GM12878 (cell line): ENCODE measurements at regions of chr10 and their contacts with region 1.

Region 1: DNA sequence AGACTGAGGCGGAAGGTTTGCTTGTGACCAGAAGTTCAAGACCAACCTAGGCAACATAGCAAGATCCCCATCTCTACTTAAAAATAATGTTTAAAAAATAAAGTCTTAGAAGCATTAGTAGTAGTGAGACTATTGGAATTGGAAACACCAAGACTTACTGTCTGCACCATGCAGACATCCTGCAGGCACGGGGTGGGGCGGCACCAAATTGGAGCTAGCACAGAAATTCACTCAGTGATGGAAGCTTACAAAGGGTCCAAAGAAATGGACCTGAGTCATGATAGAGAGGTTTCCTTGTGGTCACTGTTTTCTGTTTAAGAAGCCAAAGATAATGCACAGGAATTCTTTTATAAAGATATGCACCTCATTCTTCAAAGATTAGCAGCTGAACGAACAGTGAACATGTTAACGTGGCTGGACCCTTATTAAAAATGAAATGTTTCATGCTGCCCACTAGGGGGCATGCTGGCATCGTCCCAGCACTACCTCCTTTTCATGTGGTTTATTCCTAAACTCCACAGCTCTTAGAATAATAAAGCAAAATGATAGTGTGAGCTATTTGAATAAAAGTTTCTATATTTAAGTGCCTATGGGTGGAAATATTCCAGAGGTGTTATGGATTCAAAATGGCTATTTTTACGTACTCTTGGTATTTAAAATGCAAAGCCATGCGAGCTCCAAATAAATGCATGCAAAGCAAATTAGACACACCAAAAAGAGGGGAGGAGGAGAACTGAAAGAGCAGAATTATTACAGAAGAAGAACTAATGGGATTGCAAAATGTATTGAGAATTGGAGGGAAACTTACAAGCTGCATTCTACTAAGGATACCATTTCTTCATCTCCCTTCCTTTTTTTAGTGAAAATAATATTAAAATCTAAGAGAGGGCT is 28.6 kb downstream of the PDSS1 start:
- DNase-seq: no peak
- ATAC-seq: peak; percentile 81
- H3K4me3 ChIP-seq: no peak overlapping the region
- H3K27ac ChIP-seq: no peak overlapping the region
- H3K4me1 ChIP-seq: no peaks in the 10 kb centered on the region
- H3K27me3 ChIP-seq: no peaks in the 10 kb centered on the region
- CTCF ChIP-seq: peak; percentile 70 to 89 (median 76); a peak in 5 of 6 replicates
- EP300 ChIP-seq: no peak
- POLR2A ChIP-seq: no peak
- RAD21 ChIP-seq: peak; percentile 97

Region 2: DNA sequence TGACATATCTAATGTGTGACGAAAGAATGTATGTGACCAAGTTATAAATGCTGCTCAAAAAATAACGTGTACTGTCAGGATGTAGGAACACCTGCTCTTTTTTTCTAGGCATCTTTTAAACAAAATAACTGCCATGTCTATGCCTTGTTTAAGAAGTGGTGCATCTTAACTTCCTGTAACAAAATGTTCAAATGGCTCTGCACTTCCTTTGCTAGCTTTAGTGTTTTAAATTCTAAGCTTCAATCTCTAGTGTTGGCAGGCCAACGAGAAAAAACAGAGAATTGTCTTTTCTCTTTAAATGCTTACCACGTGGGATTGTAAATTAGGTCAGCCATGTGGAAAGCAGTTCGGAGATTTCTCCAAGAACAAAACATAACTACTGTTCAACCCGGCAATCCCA is 43.2 kb before region 1 on chr10:
- CTCF ChIA-PET with region 1: interaction called, 19 read pairs
- POLR2A ChIA-PET with region 1: no interaction called
- RAD21 ChIA-PET with region 1: interaction called, 4 read pairs
- SMC1A ChIA-PET with region 1: interaction called, 4 read pairs
- in situ Hi-C with region 1: no loop called
- intact Hi-C with region 1: no loop called
- DNase-seq: no peak
- ATAC-seq: no peak
- H3K4me3 ChIP-seq: no peak overlapping the region
- H3K27ac ChIP-seq: no peak overlapping the region
- H3K4me1 ChIP-seq: no peaks in the 10 kb centered on the region
- H3K27me3 ChIP-seq: no peaks in the 10 kb centered on the region
- CTCF ChIP-seq: no peak
- EP300 ChIP-seq: no peak
- POLR2A ChIP-seq: no peak
- RAD21 ChIP-seq: no peak

Region 3: GRCh38 chr10:26714415-26715136 is 11.5 kb before region 1 on chr10:
- CTCF ChIA-PET with region 1: interaction called, 10 read pairs
- POLR2A ChIA-PET with region 1: interaction called, 7 read pairs
- RAD21 ChIA-PET with region 1: no interaction called
- SMC1A ChIA-PET with region 1: interaction called, 7 read pairs
- in situ Hi-C with region 1: no loop called
- intact Hi-C with region 1: no loop called
- DNase-seq: no peak
- ATAC-seq: no peak
- H3K4me3 ChIP-seq: no peak overlapping the region
- H3K27ac ChIP-seq: no peak overlapping the region
- H3K4me1 ChIP-seq: no peaks in the 10 kb centered on the region
- H3K27me3 ChIP-seq: no peaks in the 10 kb centered on the region
- CTCF ChIP-seq: no peak
- EP300 ChIP-seq: no peak
- POLR2A ChIP-seq: no peak
- RAD21 ChIP-seq: no peak

Region 4: DNA sequence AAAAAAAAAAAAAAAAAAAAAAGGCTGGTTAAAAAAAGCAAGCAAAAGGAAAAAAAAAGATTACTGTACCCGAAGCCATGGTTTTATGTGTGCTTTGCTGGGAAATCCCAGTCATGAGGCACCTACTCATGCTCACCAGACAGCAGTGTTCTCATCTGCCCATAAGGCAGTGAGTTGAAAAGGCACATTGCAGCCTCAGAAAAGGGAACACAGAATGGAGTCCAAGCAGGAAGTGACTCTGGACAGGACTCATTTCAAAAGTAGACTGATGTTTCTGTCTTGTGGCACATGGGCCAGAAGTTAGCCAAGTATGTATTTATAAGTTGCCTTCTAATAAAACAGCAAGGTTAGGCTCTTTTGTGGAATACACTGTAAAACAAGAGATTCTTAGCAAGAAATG is 11.6 kb after region 1 on chr10:
- CTCF ChIA-PET with region 1: interaction called, 29 read pairs
- POLR2A ChIA-PET with region 1: interaction called, 4 read pairs
- RAD21 ChIA-PET with region 1: interaction called, 13 read pairs
- SMC1A ChIA-PET with region 1: interaction called, 30 read pairs
- in situ Hi-C with region 1: no loop called
- intact Hi-C with region 1: no loop called
- DNase-seq: peak; percentile 95
- ATAC-seq: peak; percentile 90
- H3K4me3 ChIP-seq: no peak overlapping the region
- H3K27ac ChIP-seq: peak overlapping the region; percentile 92
- H3K4me1 ChIP-seq: peaks cover 62% of the 10 kb centered on the region
- H3K27me3 ChIP-seq: no peaks in the 10 kb centered on the region
- CTCF ChIP-seq: no peak
- EP300 ChIP-seq: peak; percentile 11 to 85; a peak in 3 of 4 replicates
- POLR2A ChIP-seq: peak; percentile 76
- RAD21 ChIP-seq: peak; percentile 24; the same call in 1 of the 2 replicates

Region 5: DNA sequence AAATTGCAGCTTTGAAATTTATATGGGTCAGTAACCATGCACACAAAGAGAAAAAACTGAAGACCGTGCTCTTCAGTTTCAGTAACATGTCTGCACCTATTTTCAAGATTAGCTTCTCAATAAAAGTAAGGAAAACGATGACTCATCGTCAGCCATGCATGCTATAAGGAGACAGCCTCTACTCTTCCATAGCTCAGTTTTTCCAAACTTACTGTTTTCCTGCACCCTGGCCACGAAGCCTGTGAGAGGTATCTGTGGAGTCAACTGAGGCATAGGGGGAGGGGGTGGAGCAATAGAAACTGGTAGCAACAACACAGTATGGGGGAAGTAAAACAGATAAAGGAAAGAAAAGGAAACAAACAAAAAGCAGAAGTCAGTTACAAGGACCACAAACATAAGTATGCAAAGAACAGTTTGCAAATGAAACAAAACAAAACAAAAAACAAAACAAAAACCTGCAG is 29.4 kb after region 1 on chr10:
- CTCF ChIA-PET with region 1: interaction called, 21 read pairs
- POLR2A ChIA-PET with region 1: interaction called, 3 read pairs
- RAD21 ChIA-PET with region 1: interaction called, 10 read pairs
- SMC1A ChIA-PET with region 1: interaction called, 4 read pairs
- in situ Hi-C with region 1: no loop called
- intact Hi-C with region 1: no loop called
- DNase-seq: peak; percentile 67
- ATAC-seq: peak; percentile 98
- H3K4me3 ChIP-seq: peak overlapping the region; percentile 55; the same call in 1 of the 2 replicates
- H3K27ac ChIP-seq: peak overlapping the region; percentile 49
- H3K4me1 ChIP-seq: peaks cover 9% of the 10 kb centered on the region; the same call in 1 of the 2 replicates
- H3K27me3 ChIP-seq: no peaks in the 10 kb centered on the region
- CTCF ChIP-seq: no peak
- EP300 ChIP-seq: peak in 1 of 2 experiments; percentile 22; a peak in 1 of 4 replicates
- POLR2A ChIP-seq: no peak
- RAD21 ChIP-seq: no peak

Region 6: DNA sequence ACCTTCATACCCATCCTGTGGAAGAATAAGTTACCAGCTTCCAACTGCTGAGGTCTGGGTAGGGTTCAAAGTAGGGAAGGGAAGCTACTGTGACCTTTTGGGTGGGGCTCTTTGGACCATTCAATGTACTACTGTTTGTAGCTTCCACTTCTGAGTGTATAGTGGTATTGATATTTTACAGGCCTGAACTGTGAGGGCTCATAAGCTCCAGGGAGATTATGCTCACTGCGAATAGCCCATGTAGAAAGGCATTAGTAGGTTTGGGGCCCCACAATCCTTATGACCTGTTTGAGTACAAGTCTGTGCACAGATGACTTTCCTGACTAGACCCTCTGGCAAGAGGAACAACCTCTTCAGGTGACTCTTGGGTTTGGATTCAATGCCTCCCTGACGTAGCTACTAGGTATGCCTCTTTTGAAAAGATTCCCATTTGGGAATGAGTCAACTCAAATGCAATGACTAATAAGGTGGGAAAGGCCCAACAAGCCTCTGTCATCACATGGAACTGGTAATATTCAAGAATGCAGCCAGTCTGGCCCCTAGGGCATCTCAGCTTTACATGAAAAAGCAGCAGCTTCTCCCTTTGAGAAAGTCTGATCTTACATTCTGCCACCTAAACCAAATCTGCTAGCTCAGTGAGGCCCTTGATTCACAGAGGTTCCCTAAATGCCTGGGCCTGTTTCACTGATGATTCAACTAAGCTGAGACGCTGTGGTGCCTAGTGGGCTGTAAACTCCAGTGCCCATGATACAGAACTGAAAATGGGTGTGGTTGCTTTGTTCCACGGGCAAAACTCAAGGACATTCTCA is 54.9 kb after region 1 on chr10:
- CTCF ChIA-PET with region 1: interaction called, 13 read pairs
- POLR2A ChIA-PET with region 1: interaction called, 3 read pairs
- RAD21 ChIA-PET with region 1: interaction called, 5 read pairs
- SMC1A ChIA-PET with region 1: interaction called, 12 read pairs
- in situ Hi-C with region 1: no loop called
- intact Hi-C with region 1: no loop called
- DNase-seq: peak; percentile 69
- ATAC-seq: peak; percentile 88
- H3K4me3 ChIP-seq: peak overlapping the region; percentile 13; the same call in 1 of the 2 replicates
- H3K27ac ChIP-seq: peak overlapping the region; percentile 58
- H3K4me1 ChIP-seq: peaks cover 34% of the 10 kb centered on the region
- H3K27me3 ChIP-seq: no peaks in the 10 kb centered on the region
- CTCF ChIP-seq: no peak
- EP300 ChIP-seq: no peak
- POLR2A ChIP-seq: 0 out of 2 replicates have a peak, but pooled peaks have one; percentile 9
- RAD21 ChIP-seq: no peak

Region 7: GRCh38 chr10:26869528-26869927 is 143.4 kb after region 1 on chr10:
- CTCF ChIA-PET with region 1: interaction called, 12 read pairs
- POLR2A ChIA-PET with region 1: interaction called, 3 read pairs
- RAD21 ChIA-PET with region 1: interaction called, 20 read pairs
- SMC1A ChIA-PET with region 1: interaction called, 15 read pairs
- in situ Hi-C with region 1: no loop called
- intact Hi-C with region 1: no loop called
- DNase-seq: no peak
- ATAC-seq: no peak
- H3K4me3 ChIP-seq: no peak overlapping the region
- H3K27ac ChIP-seq: no peak overlapping the region
- H3K4me1 ChIP-seq: no peaks in the 10 kb centered on the region
- H3K27me3 ChIP-seq: no peaks in the 10 kb centered on the region
- CTCF ChIP-seq: no peak
- EP300 ChIP-seq: no peak
- POLR2A ChIP-seq: no peak
- RAD21 ChIP-seq: no peak